CD4-positive, alpha-beta T cell (primary cell): ENCODE measurements at regions of chr4 and their contacts with region 1.

Region 1: GRCh38 chr4:185471235-185472102 is at the start of gene CCDC110:
- DNase-seq: peak; percentile 86 to 98 (median 92)
- ATAC-seq: peak; percentile 92
- H3K4me3 ChIP-seq: peak within 1 kb of the TSS; percentile 73
- H3K4me3 Mint-ChIP-seq: peak within 1 kb of the TSS; percentile 93
- H3K27ac ChIP-seq: peak within 1 kb of the TSS in 1 of 2 donors; percentile 31
- H3K27ac Mint-ChIP-seq: peak within 1 kb of the TSS; percentile 63
- H3K4me1 ChIP-seq: peaks cover 20% of the 10 kb centered on the region
- H3K4me1 Mint-ChIP-seq: peaks cover 18% of the 10 kb centered on the region
- H3K27me3 ChIP-seq: peaks cover 0 to 10% of the 10 kb centered on the region in 2 experiments
- H3K27me3 Mint-ChIP-seq: peaks cover 5% of the 10 kb centered on the region
- CTCF ChIP-seq: peak; percentile 48
- total RNA-seq, gene CCDC110: 0.34 to 0.36 TPM

Region 2: DNA sequence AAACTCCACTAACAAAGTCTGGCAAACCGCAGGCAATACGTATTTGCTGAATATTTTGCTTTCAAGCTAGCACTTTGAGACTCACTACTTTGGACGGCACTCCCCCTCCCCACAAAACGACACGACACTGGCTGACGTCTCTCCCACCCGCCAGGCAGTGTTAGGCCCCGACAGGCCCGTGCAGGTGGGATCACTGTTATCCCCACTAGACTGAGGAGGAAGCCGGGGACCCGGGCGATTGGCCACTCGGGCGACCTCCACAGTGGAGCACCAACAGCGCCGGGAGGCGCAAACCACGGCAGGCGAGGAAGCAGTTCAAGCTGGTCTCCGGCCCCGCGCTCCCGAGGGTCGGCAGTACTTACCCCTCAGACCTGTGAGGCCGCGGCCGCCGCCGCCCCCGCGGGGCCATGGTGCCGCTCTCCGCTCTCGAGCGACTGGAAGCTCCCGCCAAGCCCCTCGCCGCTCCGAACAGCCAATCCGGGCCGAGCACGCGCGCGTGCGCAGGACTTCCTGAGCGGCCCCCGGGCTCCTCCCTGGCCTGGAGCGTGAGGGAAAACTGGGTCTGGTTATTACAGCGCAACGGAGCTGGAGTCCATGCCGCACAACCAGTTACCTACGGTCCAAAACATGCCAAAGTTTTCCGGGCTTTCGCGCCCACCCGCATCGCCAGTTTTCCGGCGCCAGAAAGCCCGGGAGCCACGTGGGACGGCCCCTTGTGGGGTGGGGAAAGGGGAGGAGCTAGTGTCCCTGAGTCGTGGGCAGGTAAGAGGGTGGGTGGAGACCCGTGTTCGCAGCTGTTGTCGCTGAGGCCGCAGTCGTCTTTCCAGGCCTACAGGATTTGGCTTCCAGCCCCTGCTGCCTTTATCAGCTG is 737.6 kb before region 1 on chr4 and contains the start of gene CENPU:
- CTCF ChIA-PET with region 1: no interaction called
- POLR2A ChIA-PET with region 1: no interaction called
- intact Hi-C with region 1: loop called in 1 of 2 experiments (anchors 5 kb)
- DNase-seq: peak; percentile 91 to 98 (median 93)
- ATAC-seq: peak; percentile 97
- H3K4me3 ChIP-seq: peak within 1 kb of the TSS; percentile 87
- H3K4me3 Mint-ChIP-seq: peak within 1 kb of the TSS; percentile 93
- H3K27ac ChIP-seq: no peak within 1 kb of the TSS
- H3K27ac Mint-ChIP-seq: peak within 1 kb of the TSS; percentile 74
- H3K4me1 ChIP-seq: peaks cover 13% of the 10 kb centered on the region
- H3K4me1 Mint-ChIP-seq: peaks cover 17% of the 10 kb centered on the region
- H3K27me3 ChIP-seq: no peaks in the 10 kb centered on the region
- H3K27me3 Mint-ChIP-seq: no peaks in the 10 kb centered on the region
- CTCF ChIP-seq: no peak
- total RNA-seq, gene CENPU: 1.9 to 2.8 TPM

Region 3: DNA sequence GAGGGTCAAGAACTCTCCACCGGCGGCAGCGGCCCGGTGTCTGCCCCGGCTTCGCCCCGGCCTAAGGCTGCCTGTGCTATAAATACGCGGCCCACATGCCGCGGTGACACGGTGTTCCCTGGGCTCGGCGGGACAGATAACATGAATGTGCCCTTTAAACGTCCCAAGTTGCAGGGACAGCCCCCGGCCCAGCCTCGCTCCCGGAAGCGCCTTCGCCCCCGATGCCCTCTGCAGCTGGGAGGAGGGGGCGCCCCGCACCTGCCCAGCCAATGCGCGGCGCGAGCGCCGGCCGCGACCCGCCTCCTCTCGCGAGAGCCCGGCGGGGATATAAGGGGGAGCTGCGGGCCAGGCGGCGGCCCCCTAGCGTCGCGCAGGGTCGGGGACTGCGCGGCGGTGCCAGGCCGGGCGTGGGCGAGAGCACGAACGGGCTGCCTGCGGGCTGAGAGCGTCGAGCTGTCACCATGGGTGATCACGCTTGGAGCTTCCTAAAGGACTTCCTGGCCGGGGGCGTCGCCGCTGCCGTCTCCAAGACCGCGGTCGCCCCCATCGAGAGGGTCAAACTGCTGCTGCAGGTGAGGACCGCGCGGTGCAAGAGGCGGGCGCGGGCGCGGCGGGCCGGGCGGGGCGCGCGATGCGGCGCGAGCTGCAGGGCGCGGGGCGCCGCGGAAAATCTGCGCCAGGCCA is 328.4 kb before region 1 on chr4 and contains the start of gene SLC25A4:
- CTCF ChIA-PET with region 1: no interaction called
- POLR2A ChIA-PET with region 1: no interaction called
- intact Hi-C with region 1: loop called in 1 of 2 experiments (anchors 5 kb)
- DNase-seq: peak; percentile 59 to 91 (median 78)
- ATAC-seq: peak; percentile 93
- H3K4me3 ChIP-seq: peak within 1 kb of the TSS; percentile 72
- H3K4me3 Mint-ChIP-seq: peak within 1 kb of the TSS; percentile 96
- H3K27ac ChIP-seq: no peak within 1 kb of the TSS
- H3K27ac Mint-ChIP-seq: peak within 1 kb of the TSS; percentile 63
- H3K4me1 ChIP-seq: peaks cover 14% of the 10 kb centered on the region
- H3K4me1 Mint-ChIP-seq: peaks cover 18% of the 10 kb centered on the region
- H3K27me3 ChIP-seq: peaks cover 11 to 12% of the 10 kb centered on the region in 2 experiments
- H3K27me3 Mint-ChIP-seq: peaks cover 53% of the 10 kb centered on the region
- CTCF ChIP-seq: peak; percentile 34
- total RNA-seq, gene SLC25A4: 4.1 TPM

Region 4: DNA sequence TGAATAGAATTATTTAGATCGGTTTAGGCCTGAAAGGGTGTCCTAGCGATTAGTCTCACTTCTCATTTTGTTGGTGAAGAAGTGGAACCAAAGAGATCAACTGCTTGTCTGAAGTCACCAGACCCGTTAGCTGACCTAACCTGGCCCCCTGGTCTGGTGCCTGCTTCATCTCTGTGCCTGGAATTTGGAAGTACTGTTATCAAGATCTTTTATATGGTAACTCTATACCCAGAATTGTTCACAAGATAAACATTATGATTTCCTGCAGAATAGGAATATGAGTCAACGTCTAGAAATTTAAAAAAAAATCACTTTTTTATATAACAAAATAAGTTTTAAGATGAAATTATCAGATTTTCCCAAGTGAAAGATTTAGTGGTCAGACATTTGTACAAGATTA is 113.0 kb before region 1 on chr4:
- CTCF ChIA-PET with region 1: no interaction called
- POLR2A ChIA-PET with region 1: no interaction called
- intact Hi-C with region 1: no loop called
- DNase-seq: no peak
- ATAC-seq: no peak
- H3K4me3 ChIP-seq: no peak overlapping the region
- H3K4me3 Mint-ChIP-seq: no peak overlapping the region
- H3K27ac ChIP-seq: no peak overlapping the region
- H3K27ac Mint-ChIP-seq: no peak overlapping the region
- H3K4me1 ChIP-seq: no peaks in the 10 kb centered on the region
- H3K4me1 Mint-ChIP-seq: no peaks in the 10 kb centered on the region
- H3K27me3 ChIP-seq: no peaks in the 10 kb centered on the region
- H3K27me3 Mint-ChIP-seq: no peaks in the 10 kb centered on the region
- CTCF ChIP-seq: no peak

Region 5: GRCh38 chr4:185425647-185426352 is 45.7 kb before region 1 on chr4 and contains the start of gene UFSP2:
- CTCF ChIA-PET with region 1: interaction called, 4 read pairs
- POLR2A ChIA-PET with region 1: interaction called, 3 read pairs
- intact Hi-C with region 1: loop called (anchors 1 to 5 kb)
- DNase-seq: peak; percentile 78 to 97 (median 88)
- ATAC-seq: peak; percentile 85
- H3K4me3 ChIP-seq: peak within 1 kb of the TSS; percentile 99
- H3K4me3 Mint-ChIP-seq: peak within 1 kb of the TSS; percentile 94
- H3K27ac ChIP-seq: peak within 1 kb of the TSS; percentile 88 to 99
- H3K27ac Mint-ChIP-seq: peak within 1 kb of the TSS; percentile 91
- H3K4me1 ChIP-seq: peaks cover 18% of the 10 kb centered on the region
- H3K4me1 Mint-ChIP-seq: peaks cover 31% of the 10 kb centered on the region
- H3K27me3 ChIP-seq: no peaks in the 10 kb centered on the region
- H3K27me3 Mint-ChIP-seq: peaks cover 6% of the 10 kb centered on the region
- CTCF ChIP-seq: no peak
- total RNA-seq, gene UFSP2: 14.5 to 16.6 TPM

Region 6: DNA sequence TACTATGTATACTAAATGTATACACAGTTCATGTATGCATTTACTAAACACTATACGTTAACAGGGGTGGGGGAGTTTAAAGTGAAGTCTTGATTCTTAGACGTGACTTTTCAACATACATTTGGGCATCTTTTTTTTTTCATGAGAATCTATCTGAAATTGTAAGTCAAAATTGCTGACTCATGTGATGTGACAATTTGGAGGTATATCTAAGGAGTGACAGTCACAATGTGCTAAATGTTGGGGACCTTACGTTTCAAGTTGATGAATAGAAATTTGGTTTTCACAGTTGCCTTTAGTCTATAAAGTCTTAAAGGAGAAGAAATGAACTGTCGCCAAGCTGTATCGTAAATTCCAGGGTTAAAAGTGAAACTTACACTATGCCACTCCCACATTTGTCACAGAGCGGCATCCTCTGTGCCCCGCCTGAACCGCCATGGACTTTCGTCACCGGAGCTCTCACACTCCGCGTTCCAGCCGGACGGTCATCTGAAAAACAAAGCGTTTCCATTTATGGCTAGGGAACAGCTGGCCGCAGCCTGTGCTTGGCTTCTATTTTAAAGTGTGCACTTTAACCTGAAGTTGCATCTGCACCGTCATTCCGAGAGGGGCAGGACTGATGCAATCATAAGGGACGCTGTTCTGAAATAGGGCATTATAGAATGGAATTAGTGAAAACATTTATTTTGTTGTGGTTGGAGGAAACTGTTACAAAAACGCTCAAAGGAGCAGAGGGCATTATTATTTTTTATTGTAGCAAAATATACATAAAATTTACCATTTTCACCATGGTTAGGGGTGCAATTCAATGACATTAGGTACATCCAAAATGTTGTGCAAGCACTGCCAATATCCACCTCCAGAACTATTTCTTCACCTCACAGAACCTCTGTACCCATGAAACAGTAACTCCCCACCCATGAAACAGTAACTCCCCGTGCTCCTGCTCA is 32.9 kb after region 1 on chr4:
- CTCF ChIA-PET with region 1: no interaction called
- POLR2A ChIA-PET with region 1: no interaction called
- intact Hi-C with region 1: no loop called
- DNase-seq: no peak
- ATAC-seq: no peak
- H3K4me3 ChIP-seq: no peak overlapping the region
- H3K4me3 Mint-ChIP-seq: no peak overlapping the region
- H3K27ac ChIP-seq: no peak overlapping the region
- H3K27ac Mint-ChIP-seq: no peak overlapping the region
- H3K4me1 ChIP-seq: no peaks in the 10 kb centered on the region
- H3K4me1 Mint-ChIP-seq: no peaks in the 10 kb centered on the region
- H3K27me3 ChIP-seq: peaks cover 7 to 14% of the 10 kb centered on the region in 2 experiments
- H3K27me3 Mint-ChIP-seq: peaks cover 56% of the 10 kb centered on the region
- CTCF ChIP-seq: no peak

Region 7: DNA sequence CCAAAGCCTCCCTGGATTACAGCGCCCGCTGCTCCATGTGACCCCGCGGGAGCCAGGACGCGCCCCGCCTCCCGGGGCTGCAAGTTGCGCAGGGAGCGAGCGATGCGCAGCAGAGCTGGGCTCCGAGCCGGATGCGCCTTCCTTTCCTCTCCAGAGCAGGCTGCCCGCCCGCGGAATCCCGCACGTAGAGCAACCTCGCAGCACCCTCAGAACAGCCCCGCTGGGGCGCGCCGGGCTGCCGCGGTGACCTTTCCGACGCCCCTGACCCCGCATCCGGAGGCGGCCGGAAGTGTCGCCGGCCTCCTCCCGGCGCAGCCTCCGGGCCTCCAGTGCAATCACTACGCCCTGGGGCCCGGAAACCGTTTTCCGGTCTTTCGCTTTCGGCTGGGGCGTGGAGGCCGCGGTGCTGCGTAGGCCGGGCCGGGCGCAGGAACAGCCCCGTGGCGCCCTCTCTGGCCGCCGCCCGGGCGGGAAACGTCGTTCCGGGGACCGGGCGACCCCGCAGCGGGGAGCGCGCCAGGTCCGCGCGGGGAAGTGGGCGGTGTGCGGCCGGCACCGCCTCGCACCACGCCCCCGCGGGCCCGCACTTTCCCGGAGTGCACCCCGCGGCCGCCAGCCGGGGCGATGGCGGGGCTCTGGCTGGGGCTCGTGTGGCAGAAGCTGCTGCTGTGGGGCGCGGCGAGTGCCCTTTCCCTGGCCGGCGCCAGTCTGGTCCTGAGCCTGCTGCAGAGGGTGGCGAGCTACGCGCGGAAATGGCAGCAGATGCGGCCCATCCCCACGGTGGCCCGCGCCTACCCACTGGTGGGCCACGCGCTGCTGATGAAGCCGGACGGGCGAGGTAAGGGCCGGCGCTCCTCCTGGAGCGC is 720.0 kb after region 1 on chr4 and contains the start of gene CYP4V2:
- CTCF ChIA-PET with region 1: no interaction called
- POLR2A ChIA-PET with region 1: no interaction called
- intact Hi-C with region 1: loop called in 1 of 2 experiments (anchors 10 kb)
- DNase-seq: peak; percentile 72 to 94 (median 84)
- ATAC-seq: peak; percentile 74
- H3K4me3 ChIP-seq: peak within 1 kb of the TSS; percentile 86
- H3K4me3 Mint-ChIP-seq: peak within 1 kb of the TSS; percentile 96
- H3K27ac ChIP-seq: peak within 1 kb of the TSS; percentile 83 to 88
- H3K27ac Mint-ChIP-seq: peak within 1 kb of the TSS; percentile 97
- H3K4me1 ChIP-seq: peaks cover 24% of the 10 kb centered on the region
- H3K4me1 Mint-ChIP-seq: peaks cover 62% of the 10 kb centered on the region
- H3K27me3 ChIP-seq: no peaks in the 10 kb centered on the region
- H3K27me3 Mint-ChIP-seq: no peaks in the 10 kb centered on the region
- CTCF ChIP-seq: peak; percentile 27
- total RNA-seq, gene CYP4V2: 12.7 to 12.8 TPM

Region 8: GRCh38 chr4:186514271-186514950 is 1042.9 kb after region 1 on chr4:
- CTCF ChIA-PET with region 1: no interaction called
- POLR2A ChIA-PET with region 1: no interaction called
- intact Hi-C with region 1: no loop called
- DNase-seq: no peak
- ATAC-seq: no peak
- H3K4me3 ChIP-seq: no peak overlapping the region
- H3K4me3 Mint-ChIP-seq: no peak overlapping the region
- H3K27ac ChIP-seq: no peak overlapping the region
- H3K27ac Mint-ChIP-seq: no peak overlapping the region
- H3K4me1 ChIP-seq: no peaks in the 10 kb centered on the region
- H3K4me1 Mint-ChIP-seq: no peaks in the 10 kb centered on the region
- H3K27me3 ChIP-seq: no peaks in the 10 kb centered on the region
- H3K27me3 Mint-ChIP-seq: no peaks in the 10 kb centered on the region
- CTCF ChIP-seq: no peak